ENCODE measurements at regions of chr17 and their contacts with region 1.

Region 1: DNA sequence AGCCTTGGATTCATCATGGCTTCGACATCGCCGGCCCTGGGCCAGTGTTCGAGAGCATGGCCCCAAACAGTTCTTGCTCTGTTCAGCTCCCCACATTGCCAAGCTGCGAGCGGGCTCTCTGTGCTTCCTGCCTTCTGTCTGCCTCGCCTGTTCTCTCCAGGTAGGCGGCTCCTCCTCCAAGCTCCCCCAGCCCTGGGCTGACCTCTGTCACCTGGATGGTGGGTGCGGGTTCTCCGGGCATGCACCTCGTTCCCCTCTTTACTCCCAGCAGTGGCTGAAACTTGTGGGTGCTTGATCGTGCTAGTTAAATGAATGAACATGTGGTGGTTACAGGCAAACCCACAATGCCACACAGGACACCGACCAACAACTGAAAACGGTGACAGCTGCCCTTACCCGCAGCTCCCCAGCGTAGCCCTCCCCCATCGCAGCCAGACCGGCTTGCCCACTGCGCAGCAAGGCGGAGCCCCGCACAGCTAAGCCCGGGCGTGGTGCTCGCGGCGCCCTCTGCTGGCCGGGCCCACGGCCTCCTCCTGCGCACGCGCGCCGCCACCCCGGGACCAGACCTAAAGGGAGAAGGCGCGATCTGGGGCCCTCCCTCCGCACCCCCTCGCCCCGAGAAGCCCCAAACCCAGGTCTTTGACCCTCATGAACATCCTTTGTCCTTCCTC is 23.0 kb upstream of the EIF1 start:
- DNase-seq: peak in 1 of 2 experiments; percentile 97
- H3K4me3 ChIP-seq: peak overlapping the region; percentile 12 to 67 (median 44); a peak in 7 of 8 replicates
- H3K27ac ChIP-seq: no peak overlapping the region
- H3K4me1 ChIP-seq: peaks cover 0 to 14% (median 6%) of the 10 kb centered on the region in 4 experiments; a peak in 5 of 7 replicates
- H3K27me3 ChIP-seq: no peaks in the 10 kb centered on the region; a peak in 3 of 7 replicates
- CTCF ChIP-seq: peak; percentile 90 to 92 (median 92)
- EP300 ChIP-seq: no peak; a peak in 1 of 3 replicates
- POLR2A ChIP-seq: no peak
- RAD21 ChIP-seq: peak; percentile 42 to 49

Region 2: GRCh38 chr17:40862985-40863733 is 802.5 kb before region 1 on chr17:
- CTCF ChIA-PET with region 1: interaction called, 42 read pairs
- POLR2A ChIA-PET with region 1: no interaction called
- DNase-seq: peak; percentile 66 to 91
- H3K4me3 ChIP-seq: no peak overlapping the region
- H3K27ac ChIP-seq: no peak overlapping the region
- H3K4me1 ChIP-seq: no peaks in the 10 kb centered on the region; a peak in 1 of 7 replicates
- H3K27me3 ChIP-seq: peaks cover 0 to 4% (median 0%) of the 10 kb centered on the region in 4 experiments; a peak in 1 of 7 replicates
- CTCF ChIP-seq: peak; percentile 80 to 96 (median 95)
- EP300 ChIP-seq: no peak
- POLR2A ChIP-seq: no peak
- RAD21 ChIP-seq: peak; percentile 81 to 88

Region 3: GRCh38 chr17:41131979-41132378 is 533.7 kb before region 1 on chr17:
- CTCF ChIA-PET with region 1: no interaction called
- POLR2A ChIA-PET with region 1: no interaction called
- DNase-seq: no peak
- H3K4me3 ChIP-seq: no peak overlapping the region
- H3K27ac ChIP-seq: no peak overlapping the region
- H3K4me1 ChIP-seq: no peaks in the 10 kb centered on the region
- H3K27me3 ChIP-seq: no peaks in the 10 kb centered on the region
- CTCF ChIP-seq: no peak
- EP300 ChIP-seq: no peak
- POLR2A ChIP-seq: no peak
- RAD21 ChIP-seq: no peak

Region 4: GRCh38 chr17:41496820-41497408 is 168.8 kb before region 1 on chr17:
- CTCF ChIA-PET with region 1: interaction called, 12 read pairs
- POLR2A ChIA-PET with region 1: no interaction called
- DNase-seq: peak; percentile 68 to 84
- H3K4me3 ChIP-seq: no peak overlapping the region
- H3K27ac ChIP-seq: no peak overlapping the region
- H3K4me1 ChIP-seq: peaks cover 0 to 19% (median 12%) of the 10 kb centered on the region in 4 experiments; a peak in 6 of 7 replicates
- H3K27me3 ChIP-seq: no peaks in the 10 kb centered on the region
- CTCF ChIP-seq: peak; percentile 82 to 94 (median 88)
- EP300 ChIP-seq: no peak
- POLR2A ChIP-seq: no peak
- RAD21 ChIP-seq: peak; percentile 80 to 92

Region 5: GRCh38 chr17:41530062-41531051 is 135.3 kb before region 1 on chr17:
- CTCF ChIA-PET with region 1: interaction called, 12 read pairs
- POLR2A ChIA-PET with region 1: interaction called, 11 read pairs
- DNase-seq: no peak
- H3K4me3 ChIP-seq: no peak overlapping the region
- H3K27ac ChIP-seq: no peak overlapping the region
- H3K4me1 ChIP-seq: peaks cover 2 to 19% (median 10%) of the 10 kb centered on the region in 4 experiments
- H3K27me3 ChIP-seq: no peaks in the 10 kb centered on the region
- CTCF ChIP-seq: no peak
- EP300 ChIP-seq: no peak
- POLR2A ChIP-seq: no peak
- RAD21 ChIP-seq: no peak

Region 6: DNA sequence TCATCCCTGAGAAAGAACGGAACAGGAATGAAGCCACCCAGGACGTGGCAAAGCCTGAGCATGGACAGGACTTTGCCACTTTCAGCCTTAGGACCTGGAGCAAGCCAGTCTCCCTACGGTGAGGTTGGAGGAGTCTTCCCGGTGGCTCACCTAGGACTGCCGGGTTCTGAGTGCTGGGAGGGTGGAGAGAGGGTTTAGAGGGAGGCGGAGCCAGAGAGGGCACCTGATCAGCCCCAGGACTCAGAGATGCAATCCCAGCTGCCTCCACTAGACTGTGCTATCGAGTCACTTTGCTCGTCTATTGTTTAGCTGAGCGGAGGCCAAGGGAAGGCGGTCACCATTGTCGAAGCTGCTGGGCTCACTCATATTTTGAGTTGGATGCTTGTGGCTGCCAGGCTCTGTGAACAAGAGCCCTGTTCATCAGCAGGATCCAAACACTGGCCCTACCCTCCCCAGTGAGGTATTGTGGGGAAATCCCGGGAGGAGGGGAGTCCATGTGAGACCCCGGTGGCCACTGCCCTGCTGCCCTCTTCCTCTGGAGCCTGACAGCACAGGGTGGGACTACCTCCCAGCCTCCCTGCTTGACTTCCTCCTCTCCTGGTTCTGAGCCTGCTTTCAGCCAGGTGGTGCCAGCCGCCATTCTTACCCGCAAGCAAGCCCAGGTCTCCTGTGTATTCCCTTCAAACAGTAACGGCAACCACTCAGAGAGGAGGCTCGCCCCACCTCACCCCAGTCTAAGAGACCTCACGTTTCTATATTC is 86.0 kb before region 1 on chr17:
- CTCF ChIA-PET with region 1: interaction called, 11 read pairs
- POLR2A ChIA-PET with region 1: no interaction called
- DNase-seq: peak; percentile 78 to 98
- H3K4me3 ChIP-seq: no peak overlapping the region
- H3K27ac ChIP-seq: no peak overlapping the region
- H3K4me1 ChIP-seq: peaks cover 0 to 4% (median 2%) of the 10 kb centered on the region in 4 experiments; a peak in 3 of 7 replicates
- H3K27me3 ChIP-seq: peaks cover 0 to 2% (median 0%) of the 10 kb centered on the region in 4 experiments; a peak in 1 of 7 replicates
- CTCF ChIP-seq: peak; percentile 85 to 99 (median 88)
- EP300 ChIP-seq: no peak
- POLR2A ChIP-seq: peak in 1 of 2 experiments; percentile 75; a peak in 2 of 3 replicates
- RAD21 ChIP-seq: peak; percentile 63 to 76

Region 7: GRCh38 chr17:41678907-41679739 is 13.4 kb after region 1 on chr17:
- CTCF ChIA-PET with region 1: interaction called, 59 read pairs
- POLR2A ChIA-PET with region 1: interaction called, 11 read pairs
- DNase-seq: no peak
- H3K4me3 ChIP-seq: no peak overlapping the region
- H3K27ac ChIP-seq: no peak overlapping the region
- H3K4me1 ChIP-seq: peaks cover 2 to 22% (median 11%) of the 10 kb centered on the region in 4 experiments; a peak in 6 of 7 replicates
- H3K27me3 ChIP-seq: no peaks in the 10 kb centered on the region
- CTCF ChIP-seq: peak in 2 of 3 experiments; percentile 24 to 28; a peak in 1 of 4 replicates
- EP300 ChIP-seq: no peak
- POLR2A ChIP-seq: no peak
- RAD21 ChIP-seq: 0 out of 4 replicates have a peak, but pooled peaks of 1 of the 2 experiments have one; percentile 23

Region 8: GRCh38 chr17:41754066-41754465 is 88.4 kb after region 1 on chr17:
- CTCF ChIA-PET with region 1: no interaction called
- POLR2A ChIA-PET with region 1: no interaction called
- DNase-seq: no peak
- H3K4me3 ChIP-seq: no peak overlapping the region
- H3K27ac ChIP-seq: no peak overlapping the region
- H3K4me1 ChIP-seq: no peaks in the 10 kb centered on the region
- H3K27me3 ChIP-seq: no peaks in the 10 kb centered on the region
- CTCF ChIP-seq: no peak
- EP300 ChIP-seq: no peak
- POLR2A ChIP-seq: no peak
- RAD21 ChIP-seq: no peak

Measured in H1 (cell line).